MCF 10A (cell line): ENCODE measurements at regions of chr2 and their contacts with region 1.

Region 1: GRCh38 chr2:171598713-171599319 is 76.5 kb downstream of the CYBRD1 start:
- DNase-seq: peak; percentile 81
- H3K4me3 Mint-ChIP-seq: no peak overlapping the region
- H3K27ac Mint-ChIP-seq: no peak overlapping the region
- H3K4me1 Mint-ChIP-seq: peaks cover 12% of the 10 kb centered on the region
- H3K27me3 Mint-ChIP-seq: no peaks in the 10 kb centered on the region
- CTCF ChIP-seq: peak; percentile 60

Region 2: DNA sequence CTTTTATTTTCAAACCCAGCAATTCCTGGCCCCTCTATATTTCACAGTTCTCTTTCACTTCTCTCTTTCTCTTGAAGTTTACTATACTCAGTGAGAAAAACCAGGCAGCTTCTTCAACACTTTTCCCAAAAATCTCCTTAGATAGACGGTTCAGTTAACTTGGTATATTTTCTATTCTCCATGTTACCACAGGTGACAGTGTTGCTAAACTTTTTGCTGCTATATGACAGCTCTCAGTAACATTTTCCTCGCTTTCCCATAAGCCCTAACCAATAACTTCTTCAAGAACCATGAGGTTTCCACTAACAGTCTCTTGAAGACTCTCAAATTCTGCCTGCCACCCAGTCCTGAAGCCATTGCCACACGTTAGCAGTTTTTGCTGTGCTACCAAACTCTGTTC is 30.7 kb before region 1 on chr2:
- CTCF ChIA-PET with region 1: interaction called, 19 read pairs
- POLR2A ChIA-PET with region 1: interaction called, 4 read pairs
- intact Hi-C with region 1: no loop called
- DNase-seq: no peak
- H3K4me3 Mint-ChIP-seq: no peak overlapping the region
- H3K27ac Mint-ChIP-seq: no peak overlapping the region
- H3K4me1 Mint-ChIP-seq: no peaks in the 10 kb centered on the region
- H3K27me3 Mint-ChIP-seq: no peaks in the 10 kb centered on the region
- CTCF ChIP-seq: no peak

Region 3: DNA sequence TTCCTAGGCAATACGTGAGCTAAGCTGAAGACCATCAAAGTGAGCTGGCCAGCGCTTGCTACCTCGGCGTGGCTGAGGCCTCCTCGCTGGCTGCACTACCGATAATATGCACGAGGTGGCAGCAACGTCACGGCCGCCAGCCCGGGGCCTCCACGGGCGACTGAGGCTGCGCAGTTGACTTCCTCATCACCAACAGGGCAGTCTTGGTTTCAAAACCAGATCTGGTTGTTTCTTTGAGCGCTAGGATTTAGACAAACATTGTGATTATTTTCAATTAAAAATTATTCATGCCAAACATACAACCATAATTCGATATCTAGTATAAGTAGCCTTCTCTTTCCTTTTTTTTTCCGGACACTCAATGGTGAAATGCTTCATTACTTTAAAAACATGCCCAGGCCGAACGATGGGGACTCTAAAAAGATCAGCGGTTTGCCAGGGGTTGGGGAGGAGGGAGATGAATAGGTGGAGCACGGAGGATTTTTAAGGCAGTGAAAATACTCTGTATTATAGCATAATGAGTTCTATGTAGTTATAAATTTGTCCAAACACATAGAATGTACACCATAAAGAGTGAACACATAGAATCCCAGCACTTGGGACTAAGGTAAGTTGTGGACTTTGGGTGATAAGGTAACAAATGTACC is 24.5 kb before region 1 on chr2:
- CTCF ChIA-PET with region 1: interaction called, 19 read pairs
- POLR2A ChIA-PET with region 1: interaction called, 4 read pairs
- intact Hi-C with region 1: no loop called
- DNase-seq: peak; percentile 75
- H3K4me3 Mint-ChIP-seq: no peak overlapping the region
- H3K27ac Mint-ChIP-seq: no peak overlapping the region
- H3K4me1 Mint-ChIP-seq: no peaks in the 10 kb centered on the region
- H3K27me3 Mint-ChIP-seq: no peaks in the 10 kb centered on the region
- CTCF ChIP-seq: peak; percentile 97

Region 4: GRCh38 chr2:171579481-171579880 is 19.3 kb before region 1 on chr2:
- CTCF ChIA-PET with region 1: interaction called, 5 read pairs
- POLR2A ChIA-PET with region 1: interaction called, 12 read pairs
- intact Hi-C with region 1: no loop called
- DNase-seq: peak; percentile 34
- H3K4me3 Mint-ChIP-seq: no peak overlapping the region
- H3K27ac Mint-ChIP-seq: no peak overlapping the region
- H3K4me1 Mint-ChIP-seq: peaks cover 11% of the 10 kb centered on the region
- H3K27me3 Mint-ChIP-seq: no peaks in the 10 kb centered on the region
- CTCF ChIP-seq: no peak

Region 5: DNA sequence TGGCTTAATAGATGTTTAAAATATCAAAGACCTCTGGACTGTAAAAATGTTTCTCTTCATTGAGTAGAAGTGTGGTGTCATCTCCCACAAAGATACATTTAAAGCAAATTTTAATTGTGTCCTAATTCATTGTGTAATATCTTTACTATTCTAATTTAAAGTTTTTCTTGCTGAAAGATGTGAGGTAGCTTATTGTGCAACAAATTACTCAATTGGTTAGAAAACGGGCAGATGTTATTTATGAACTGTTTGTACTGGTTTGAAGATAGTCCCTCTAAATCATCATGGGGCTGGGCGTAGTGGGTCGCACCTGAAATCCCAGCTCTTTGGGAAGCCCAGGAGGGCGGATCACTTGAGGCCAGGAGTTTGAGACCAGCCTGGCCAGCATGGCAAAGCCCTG is 11.2 kb before region 1 on chr2:
- CTCF ChIA-PET with region 1: interaction called, 11 read pairs
- POLR2A ChIA-PET with region 1: interaction called, 10 read pairs
- intact Hi-C with region 1: no loop called
- DNase-seq: peak; percentile 22
- H3K4me3 Mint-ChIP-seq: no peak overlapping the region
- H3K27ac Mint-ChIP-seq: no peak overlapping the region
- H3K4me1 Mint-ChIP-seq: peaks cover 12% of the 10 kb centered on the region
- H3K27me3 Mint-ChIP-seq: no peaks in the 10 kb centered on the region
- CTCF ChIP-seq: no peak

Region 6: DNA sequence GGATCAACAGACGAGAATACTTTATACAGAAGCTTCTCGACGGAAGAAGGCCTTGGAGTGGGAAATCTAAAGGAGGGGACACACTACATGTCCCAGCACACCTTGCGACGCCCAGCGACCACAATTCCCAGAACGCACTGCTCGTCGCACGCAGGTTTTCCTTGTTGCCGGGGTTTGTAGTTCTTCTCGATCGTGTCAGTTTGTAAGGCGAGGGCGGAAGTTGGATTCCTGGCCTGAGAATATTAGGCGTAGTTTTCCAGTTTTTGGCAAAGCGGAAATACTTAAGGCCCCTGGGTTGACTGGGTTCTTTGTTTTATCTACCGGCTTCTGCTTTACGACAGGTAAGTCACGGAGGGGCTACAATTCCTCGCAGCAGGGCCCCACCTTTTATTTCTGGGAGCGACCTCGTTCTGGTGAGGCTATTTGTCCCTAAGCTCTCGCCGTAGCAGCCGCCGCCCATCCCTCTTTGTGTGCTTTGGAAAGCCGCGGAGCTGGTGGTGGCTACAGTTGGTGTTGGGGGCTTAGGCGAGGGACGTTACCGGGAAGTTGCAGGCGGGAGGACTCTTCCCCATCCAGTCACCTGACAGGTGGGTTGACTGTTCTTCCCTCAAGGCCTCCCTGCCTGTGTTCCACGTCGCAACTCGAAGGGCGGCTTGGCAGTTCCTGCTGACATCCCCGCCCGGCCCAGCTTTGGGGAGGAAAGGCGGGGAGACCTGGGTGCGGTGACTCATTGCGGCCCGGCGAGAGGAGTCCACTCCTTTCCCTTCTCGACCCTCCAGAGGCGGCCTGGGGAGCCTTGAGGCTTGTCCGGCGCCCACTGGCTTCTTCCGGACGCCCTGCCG is 88.7 kb after region 1 on chr2 and contains the start of gene DYNC1I2:
- CTCF ChIA-PET with region 1: interaction called, 6 read pairs
- POLR2A ChIA-PET with region 1: interaction called, 9 read pairs
- intact Hi-C with region 1: loop called (anchors 5 kb)
- DNase-seq: peak; percentile 96
- H3K4me3 Mint-ChIP-seq: peak within 1 kb of the TSS; percentile 96
- H3K27ac Mint-ChIP-seq: peak within 1 kb of the TSS; percentile 95
- H3K4me1 Mint-ChIP-seq: no peaks in the 10 kb centered on the region
- H3K27me3 Mint-ChIP-seq: peaks cover 6% of the 10 kb centered on the region
- CTCF ChIP-seq: no peak
- total RNA-seq, gene DYNC1I2: 77.7 and 82.7 TPM in 2 replicates

Region 7: GRCh38 chr2:171703574-171704347 is 104.9 kb after region 1 on chr2:
- CTCF ChIA-PET with region 1: interaction called, 15 read pairs
- POLR2A ChIA-PET with region 1: interaction called, 4 read pairs
- intact Hi-C with region 1: loop called (anchors 5 kb)
- DNase-seq: peak; percentile 55
- H3K4me3 Mint-ChIP-seq: no peak overlapping the region
- H3K27ac Mint-ChIP-seq: no peak overlapping the region
- H3K4me1 Mint-ChIP-seq: peaks cover 26% of the 10 kb centered on the region
- H3K27me3 Mint-ChIP-seq: no peaks in the 10 kb centered on the region
- CTCF ChIP-seq: peak; percentile 42